ENCODE measurements at regions of chr12 and their contacts with region 1.

Region 1: GRCh38 chr12:120327593-120327992 is at the start of gene PLA2G1B:
- DNase-seq: no peak
- H3K4me3 Mint-ChIP-seq: peak within 1 kb of the TSS; percentile 7
- H3K27ac Mint-ChIP-seq: no peak within 1 kb of the TSS
- H3K4me1 Mint-ChIP-seq: peaks cover 11% of the 10 kb centered on the region
- H3K27me3 Mint-ChIP-seq: peaks cover 17% of the 10 kb centered on the region
- total RNA-seq, gene PLA2G1B: not detected in 2 replicates

Region 2: GRCh38 chr12:120228291-120229070 is 99.1 kb before region 1 on chr12:
- intact Hi-C with region 1: loop called (anchors 1 kb)
- DNase-seq: peak; percentile 80
- H3K4me3 Mint-ChIP-seq: peak overlapping the region; percentile 43
- H3K27ac Mint-ChIP-seq: peak overlapping the region; percentile 97
- H3K4me1 Mint-ChIP-seq: peaks cover 84% of the 10 kb centered on the region
- H3K27me3 Mint-ChIP-seq: no peaks in the 10 kb centered on the region

Region 3: GRCh38 chr12:120317224-120318105 is 10.1 kb before region 1 on chr12:
- intact Hi-C with region 1: loop called (anchors 1 kb)
- DNase-seq: peak; percentile 100
- H3K4me3 Mint-ChIP-seq: peak overlapping the region; percentile 89
- H3K27ac Mint-ChIP-seq: peak overlapping the region; percentile 92
- H3K4me1 Mint-ChIP-seq: peaks cover 16% of the 10 kb centered on the region
- H3K27me3 Mint-ChIP-seq: peaks cover 6% of the 10 kb centered on the region

Region 4: DNA sequence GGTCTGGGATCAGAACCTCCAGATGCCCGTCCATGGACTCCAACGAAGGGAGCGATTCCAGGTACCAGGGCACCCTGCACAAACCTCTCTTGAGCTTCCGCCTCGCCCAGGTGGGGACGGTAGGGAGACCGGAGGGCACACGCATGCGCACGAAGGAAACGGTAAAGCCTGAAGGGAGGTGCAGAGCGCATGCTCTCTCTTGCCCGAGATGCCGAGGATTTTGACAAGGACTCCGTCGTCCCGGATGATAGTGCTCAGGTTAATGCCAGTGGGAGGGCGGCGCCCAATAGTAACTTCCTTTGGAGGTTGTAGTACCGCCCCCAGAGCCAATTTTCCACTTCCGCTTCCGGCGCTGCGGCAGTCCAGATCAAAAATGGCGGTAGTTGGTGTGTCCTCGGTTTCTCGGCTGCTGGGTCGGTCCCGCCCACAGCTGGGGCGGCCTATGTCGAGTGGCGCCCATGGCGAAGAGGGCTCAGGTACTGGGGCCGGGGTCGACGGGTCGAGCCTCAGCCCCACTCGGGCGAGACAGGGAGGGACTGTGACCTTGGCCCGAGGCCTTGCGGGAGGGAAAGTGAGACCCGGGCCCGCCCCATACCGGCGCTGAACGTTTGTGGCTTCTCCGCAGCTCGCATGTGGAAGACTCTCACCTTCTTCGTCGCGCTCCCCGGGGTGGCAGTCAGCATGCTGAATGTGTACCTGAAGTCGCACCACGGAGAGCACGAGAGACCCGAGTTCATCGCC is 110.3 kb after region 1 on chr12 and contains the start of gene COX6A1:
- intact Hi-C with region 1: loop called (anchors 2 kb)
- DNase-seq: peak; percentile 97
- H3K4me3 Mint-ChIP-seq: peak within 1 kb of the TSS; percentile 100
- H3K27ac Mint-ChIP-seq: peak within 1 kb of the TSS; percentile 98
- H3K4me1 Mint-ChIP-seq: peaks cover 31% of the 10 kb centered on the region
- H3K27me3 Mint-ChIP-seq: no peaks in the 10 kb centered on the region
- total RNA-seq, gene COX6A1: 352 and 365 TPM in 2 replicates

Region 5: GRCh38 chr12:120649442-120650232 is 322.0 kb after region 1 on chr12:
- intact Hi-C with region 1: loop called (anchors 5 kb)
- DNase-seq: no peak
- H3K4me3 Mint-ChIP-seq: no peak overlapping the region
- H3K27ac Mint-ChIP-seq: no peak overlapping the region
- H3K4me1 Mint-ChIP-seq: peaks cover 15% of the 10 kb centered on the region
- H3K27me3 Mint-ChIP-seq: peaks cover 54% of the 10 kb centered on the region

Region 6: GRCh38 chr12:120874547-120875245 is 547.1 kb after region 1 on chr12:
- intact Hi-C with region 1: no loop called
- DNase-seq: no peak
- H3K4me3 Mint-ChIP-seq: no peak overlapping the region
- H3K27ac Mint-ChIP-seq: no peak overlapping the region
- H3K4me1 Mint-ChIP-seq: peaks cover 16% of the 10 kb centered on the region
- H3K27me3 Mint-ChIP-seq: no peaks in the 10 kb centered on the region